Posterior cingulate gyrus (tissue), 11 donors: ENCODE measurements at regions of chr7 and their contacts with region 1.

Region 1: DNA sequence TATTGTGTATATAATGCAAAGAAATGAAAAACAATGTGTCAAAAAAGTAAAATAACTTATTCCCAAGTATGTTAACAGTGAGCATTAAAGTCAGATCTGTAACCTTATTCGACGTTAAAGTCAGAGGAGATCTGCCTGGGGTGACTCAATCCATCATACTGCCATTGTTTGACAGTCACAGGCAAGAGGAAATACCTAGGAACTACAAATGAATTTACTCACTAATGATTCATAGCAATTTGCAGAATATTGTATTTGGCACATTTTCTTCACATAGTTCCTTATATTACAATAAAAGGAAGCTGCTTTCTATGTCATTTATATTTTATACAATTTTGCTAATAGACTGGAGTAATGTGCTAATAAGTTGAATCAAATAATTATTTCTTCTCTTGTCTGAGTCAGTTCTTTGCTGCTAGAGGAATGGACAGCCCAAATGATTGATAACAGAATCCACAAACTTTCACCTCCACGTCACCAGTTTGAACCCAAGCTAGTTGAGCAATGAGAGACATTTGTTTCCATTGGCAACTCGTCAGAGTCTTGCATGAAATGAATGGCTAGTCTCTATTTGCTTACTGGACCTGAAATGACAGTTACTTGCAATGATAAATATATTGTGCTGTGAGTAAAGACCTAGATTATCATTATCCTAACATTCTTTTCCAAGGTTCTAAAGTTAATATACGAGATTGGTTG is 48.5 kb upstream of the TMEM106B start:
- DNase-seq: no peak

Region 2: GRCh38 chr7:11960621-11961020 is 201.9 kb before region 1 on chr7:
- intact Hi-C with region 1: no loop called
- DNase-seq: no peak

Region 3: DNA sequence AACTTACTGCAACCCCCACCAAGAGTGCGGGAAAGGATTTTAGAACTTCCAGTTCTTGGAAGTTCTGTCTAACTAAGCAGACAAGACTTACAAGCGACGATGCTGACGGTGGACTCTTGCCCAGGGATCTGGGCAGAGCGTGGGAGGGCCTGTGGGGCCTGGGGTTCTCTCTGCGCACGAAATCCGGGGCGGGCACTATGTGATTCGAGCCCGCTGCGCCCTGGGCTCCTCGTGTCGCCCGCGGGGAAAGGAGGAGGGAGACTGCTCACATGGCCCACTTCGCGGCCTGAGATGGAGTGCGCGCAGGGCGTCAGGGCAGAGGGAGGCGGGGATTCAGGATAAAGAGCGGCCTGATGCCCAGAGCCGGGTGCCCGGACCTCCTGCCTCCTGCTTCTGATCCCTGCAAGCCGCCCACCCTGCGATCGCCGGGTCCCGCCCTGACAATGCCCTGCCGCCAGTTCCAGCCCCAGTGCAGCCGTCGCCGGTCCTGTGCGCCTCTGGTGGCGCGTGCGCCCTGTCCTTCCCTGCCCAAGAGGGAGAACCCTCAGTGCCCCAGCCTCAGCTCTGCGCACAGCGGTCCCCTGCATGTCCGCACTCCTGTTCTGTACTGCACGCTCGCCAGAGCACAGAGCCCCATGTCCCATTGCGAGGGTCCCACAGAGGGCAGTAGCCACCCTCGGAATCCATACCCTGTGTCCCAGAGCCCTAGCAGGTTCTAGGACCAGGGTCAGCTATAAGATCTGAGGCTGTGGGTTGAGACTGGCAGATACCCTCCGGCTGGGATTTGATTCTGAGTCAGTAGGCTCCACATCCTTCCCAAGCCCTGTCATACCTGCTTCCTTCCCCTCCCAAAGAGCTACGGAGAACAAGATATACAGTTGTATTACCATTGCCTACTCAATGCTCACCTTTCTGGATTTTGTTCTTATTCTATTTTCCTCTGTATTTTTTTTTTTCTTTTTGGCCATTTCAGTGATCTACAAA is 50.9 kb before region 1 on chr7:
- intact Hi-C with region 1: loop called (anchors 1 kb)
- DNase-seq: peak in 8 of 10 donors; percentile 26 to 90 (median 52)